ENCODE measurements at regions of chr3 and their contacts with region 1.

Region 1: GRCh38 chr3:115085197-115085865 is 61.8 kb downstream of the ZBTB20 start:
- DNase-seq: no peak
- ATAC-seq: peak in 6 of 8 donors; percentile 38 to 69 (median 56)
- H3K4me3 ChIP-seq: no peak overlapping the region
- H3K27ac ChIP-seq: peak overlapping the region in 3 of 10 donors; percentile 2 to 33 (median 14)
- H3K4me1 ChIP-seq: peaks cover 0 to 79% (median 48%) of the 10 kb centered on the region in 9 donors
- H3K27me3 ChIP-seq: no peaks in the 10 kb centered on the region
- CTCF ChIP-seq: peak in 5 of 9 donors; percentile 11 to 28 (median 16)

Region 2: DNA sequence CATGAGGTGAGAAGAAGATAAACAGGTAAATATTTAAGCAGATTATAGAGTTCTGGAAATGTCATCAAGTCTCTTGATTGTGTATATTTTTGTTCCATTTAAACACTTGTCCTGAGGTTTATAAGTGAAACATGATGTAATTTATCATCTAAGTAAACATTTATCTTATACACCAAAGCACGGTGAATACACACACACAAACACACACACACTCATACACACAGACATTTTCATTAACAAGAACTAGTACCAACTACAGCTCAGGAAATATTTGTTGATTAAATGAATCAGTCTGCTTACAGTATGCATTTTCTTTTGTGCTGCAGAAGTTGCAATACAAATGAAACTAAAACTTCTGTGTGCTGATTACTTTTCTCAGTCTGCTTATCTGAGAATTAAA is 295.5 kb before region 1 on chr3:
- intact Hi-C with region 1: no loop called
- DNase-seq: no peak
- ATAC-seq: no peak
- H3K4me3 ChIP-seq: no peak overlapping the region
- H3K27ac ChIP-seq: no peak overlapping the region
- H3K4me1 ChIP-seq: peaks cover 0 to 29% (median 10%) of the 10 kb centered on the region in 9 donors
- H3K27me3 ChIP-seq: no peaks in the 10 kb centered on the region
- CTCF ChIP-seq: no peak

Region 3: DNA sequence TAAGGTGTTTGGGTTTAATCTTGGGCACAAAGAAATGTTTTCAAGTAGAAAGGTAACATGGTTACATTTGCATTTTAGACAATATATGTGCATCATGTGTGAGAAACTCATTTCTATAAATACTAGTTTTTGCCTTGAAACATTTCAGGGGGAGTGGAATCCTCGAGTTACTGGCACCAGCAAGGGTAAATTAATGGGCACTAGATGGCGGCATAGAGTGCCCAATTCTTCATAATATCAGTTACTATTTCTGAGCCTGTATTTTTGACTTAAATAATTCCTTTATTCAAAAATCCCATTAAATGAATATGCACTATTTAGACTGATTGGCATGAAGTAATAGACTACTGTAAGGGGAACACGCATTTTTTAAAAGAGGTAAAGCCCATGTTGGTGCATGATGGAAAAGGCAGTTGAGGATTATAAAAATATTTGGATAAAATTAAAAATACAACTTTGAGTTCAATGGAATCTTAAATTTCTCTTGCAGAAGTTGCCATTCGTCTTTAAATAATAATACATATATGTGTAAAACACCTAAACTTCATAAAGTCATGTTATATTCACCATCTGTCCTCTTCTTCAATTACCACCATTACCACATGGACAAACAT is 44.6 kb before region 1 on chr3:
- intact Hi-C with region 1: loop called in 2 of 10 experiments (anchors 5 kb)
- DNase-seq: peak in 1 of 2 donors; percentile 6
- ATAC-seq: no peak
- H3K4me3 ChIP-seq: no peak overlapping the region
- H3K27ac ChIP-seq: no peak overlapping the region
- H3K4me1 ChIP-seq: peaks cover 0 to 24% (median 6%) of the 10 kb centered on the region in 9 donors
- H3K27me3 ChIP-seq: no peaks in the 10 kb centered on the region
- CTCF ChIP-seq: peak; percentile 33 to 75 (median 64)